Caco-2 (cell line): ENCODE measurements at regions of chr2 and their contacts with region 1.

Region 1: DNA sequence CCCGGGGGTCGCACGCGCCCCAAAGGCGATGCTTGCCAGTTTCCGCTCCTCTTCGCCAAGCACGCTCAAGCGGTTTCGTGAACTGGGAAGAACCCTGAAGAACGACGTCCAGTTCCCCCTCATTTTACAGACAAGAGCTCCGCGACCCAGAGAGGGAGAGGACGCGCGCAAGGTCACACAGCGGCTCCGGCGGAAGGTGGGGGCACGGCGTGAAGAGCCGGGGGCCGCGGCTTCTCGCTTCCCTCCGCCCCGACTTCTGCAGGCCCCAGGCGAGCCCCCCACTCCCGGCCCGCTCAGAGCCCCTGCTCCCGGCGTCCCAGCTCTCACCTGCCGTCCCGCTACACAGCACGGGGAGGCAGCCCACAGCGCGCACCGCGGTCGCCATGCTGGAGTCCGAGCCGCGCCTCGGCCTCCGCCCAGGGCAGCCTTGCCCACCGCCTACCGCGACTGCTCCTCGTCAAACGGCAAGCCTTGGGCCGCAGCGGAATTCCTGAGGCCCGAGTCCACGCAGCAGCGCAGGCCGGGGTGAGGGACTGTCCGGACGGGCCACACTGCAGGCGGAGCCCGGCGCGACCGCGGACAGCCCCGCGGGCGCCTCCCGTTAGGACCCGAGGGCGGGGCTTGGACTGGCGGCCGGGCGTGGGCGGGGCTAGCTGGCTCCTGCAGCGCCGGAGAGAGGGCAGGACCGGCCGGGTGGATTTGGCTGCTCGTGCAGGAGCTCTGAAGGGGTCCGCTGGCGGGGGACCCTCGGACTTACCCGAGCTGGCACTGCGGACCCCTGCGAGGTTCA is at the start of gene MRPS5:
- DNase-seq: peak; percentile 82 to 93
- H3K4me3 ChIP-seq: peak within 1 kb of the TSS; percentile 73
- H3K4me3 Mint-ChIP-seq: peak within 1 kb of the TSS; percentile 93
- H3K27ac Mint-ChIP-seq: peak within 1 kb of the TSS; percentile 95
- H3K4me1 ChIP-seq: peaks cover 6% of the 10 kb centered on the region; the same call in 1 of the 2 replicates
- H3K4me1 Mint-ChIP-seq: peaks cover 15% of the 10 kb centered on the region
- H3K27me3 ChIP-seq: no peaks in the 10 kb centered on the region
- H3K27me3 Mint-ChIP-seq: no peaks in the 10 kb centered on the region
- CTCF ChIP-seq: peak in 1 of 2 experiments; percentile 16
- total RNA-seq, gene MRPS5: 80.5 and 90.0 TPM in 2 replicates

Region 2: DNA sequence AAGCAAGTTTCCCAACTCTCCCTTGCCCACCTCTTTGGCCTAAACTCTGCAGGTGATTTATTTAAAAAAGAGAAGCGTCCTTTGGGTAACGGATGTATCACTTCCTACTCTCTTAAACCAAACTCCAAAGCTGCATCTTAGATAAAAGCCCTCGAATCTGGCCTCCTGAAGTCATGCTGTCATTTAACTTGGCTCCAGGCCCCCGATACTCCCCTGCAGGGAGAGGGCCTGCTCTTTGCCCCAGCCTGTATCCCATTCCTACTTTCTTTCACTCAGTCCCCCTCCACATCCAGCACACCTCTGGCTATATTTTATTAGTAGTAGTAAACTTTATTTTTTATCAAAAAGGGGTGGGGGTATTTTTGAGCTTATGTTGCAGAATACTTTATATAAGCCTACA is 231.4 kb before region 1 on chr2:
- CTCF ChIA-PET with region 1: no interaction called
- POLR2A ChIA-PET with region 1: no interaction called
- intact Hi-C with region 1: no loop called
- DNase-seq: no peak
- H3K4me3 ChIP-seq: no peak overlapping the region
- H3K4me3 Mint-ChIP-seq: no peak overlapping the region
- H3K27ac Mint-ChIP-seq: no peak overlapping the region
- H3K4me1 ChIP-seq: no peaks in the 10 kb centered on the region
- H3K4me1 Mint-ChIP-seq: no peaks in the 10 kb centered on the region
- H3K27me3 ChIP-seq: no peaks in the 10 kb centered on the region
- H3K27me3 Mint-ChIP-seq: peaks cover 11% of the 10 kb centered on the region
- CTCF ChIP-seq: no peak

Region 3: DNA sequence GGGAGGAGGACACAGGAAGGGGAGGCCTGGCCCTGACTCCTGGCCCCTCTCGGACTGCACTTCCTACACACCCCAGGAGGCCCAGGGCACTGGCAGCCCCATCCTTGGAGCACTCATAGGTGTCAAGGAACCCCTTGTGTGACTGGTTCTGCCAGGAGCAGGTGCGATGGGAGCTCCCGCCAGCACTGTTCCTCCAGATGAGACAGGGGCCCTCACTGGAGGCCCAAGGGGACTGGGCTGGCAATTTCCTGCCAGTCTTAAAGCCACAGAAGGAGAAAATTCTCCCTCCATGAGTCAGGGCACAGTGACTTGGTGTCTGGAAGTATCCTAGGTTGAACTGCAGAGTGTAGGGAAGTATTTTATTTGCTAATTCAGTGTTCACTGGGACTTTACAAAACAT is 138.9 kb before region 1 on chr2:
- CTCF ChIA-PET with region 1: no interaction called
- POLR2A ChIA-PET with region 1: no interaction called
- intact Hi-C with region 1: no loop called
- DNase-seq: no peak
- H3K4me3 ChIP-seq: no peak overlapping the region
- H3K4me3 Mint-ChIP-seq: no peak overlapping the region
- H3K27ac Mint-ChIP-seq: no peak overlapping the region
- H3K4me1 ChIP-seq: no peaks in the 10 kb centered on the region
- H3K4me1 Mint-ChIP-seq: no peaks in the 10 kb centered on the region
- H3K27me3 ChIP-seq: no peaks in the 10 kb centered on the region
- H3K27me3 Mint-ChIP-seq: peaks cover 18% of the 10 kb centered on the region
- CTCF ChIP-seq: no peak

Region 4: DNA sequence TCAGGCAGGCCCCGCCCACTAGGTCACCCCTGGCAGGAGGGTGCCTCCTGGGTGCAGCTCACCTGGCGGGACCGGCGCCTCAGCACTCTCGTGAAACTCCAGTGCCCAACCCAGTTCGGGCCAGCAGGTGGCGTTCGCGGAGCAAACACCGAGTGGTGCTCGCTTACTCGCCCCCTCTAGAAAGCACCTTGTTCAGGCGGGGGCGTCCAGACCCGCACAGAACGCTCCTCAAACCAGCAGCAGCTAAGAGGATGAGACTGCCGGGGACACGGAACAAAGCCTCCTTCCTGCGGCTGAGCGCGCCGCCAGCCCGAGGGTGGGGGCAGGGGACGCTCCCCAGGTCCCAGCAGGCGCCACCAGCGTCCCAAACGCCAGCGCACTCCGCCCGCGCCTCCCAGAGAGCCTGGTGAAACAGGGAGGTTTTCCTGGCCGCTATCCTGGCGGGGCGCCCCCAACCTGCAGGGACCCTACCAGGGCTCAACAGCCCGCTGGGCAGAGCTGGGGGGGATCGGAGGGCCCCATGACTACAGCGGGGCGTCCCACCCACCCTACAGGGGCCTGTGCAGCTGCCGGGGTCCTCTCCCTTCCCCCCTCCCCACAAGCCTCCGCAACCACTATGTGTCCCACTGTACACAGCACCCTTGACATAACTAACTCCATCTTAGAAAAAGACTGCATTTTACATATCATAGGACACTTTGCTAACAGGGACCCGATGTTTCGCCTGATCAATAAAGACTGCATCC is 44.6 kb before region 1 on chr2:
- CTCF ChIA-PET with region 1: interaction called, 12 read pairs
- POLR2A ChIA-PET with region 1: no interaction called
- intact Hi-C with region 1: no loop called
- DNase-seq: peak; percentile 92 to 93
- H3K4me3 ChIP-seq: peak overlapping the region; percentile 55
- H3K4me3 Mint-ChIP-seq: peak overlapping the region; percentile 71
- H3K27ac Mint-ChIP-seq: no peak overlapping the region
- H3K4me1 ChIP-seq: no peaks in the 10 kb centered on the region
- H3K4me1 Mint-ChIP-seq: no peaks in the 10 kb centered on the region
- H3K27me3 ChIP-seq: no peaks in the 10 kb centered on the region
- H3K27me3 Mint-ChIP-seq: no peaks in the 10 kb centered on the region
- CTCF ChIP-seq: peak; percentile 94

Region 5: GRCh38 chr2:95106081-95106480 is 15.5 kb before region 1 on chr2:
- CTCF ChIA-PET with region 1: no interaction called
- POLR2A ChIA-PET with region 1: interaction called, 10 read pairs
- intact Hi-C with region 1: no loop called
- DNase-seq: no peak
- H3K4me3 ChIP-seq: no peak overlapping the region
- H3K4me3 Mint-ChIP-seq: no peak overlapping the region
- H3K27ac Mint-ChIP-seq: no peak overlapping the region
- H3K4me1 ChIP-seq: no peaks in the 10 kb centered on the region
- H3K4me1 Mint-ChIP-seq: no peaks in the 10 kb centered on the region
- H3K27me3 ChIP-seq: no peaks in the 10 kb centered on the region
- H3K27me3 Mint-ChIP-seq: no peaks in the 10 kb centered on the region
- CTCF ChIP-seq: no peak

Region 6: DNA sequence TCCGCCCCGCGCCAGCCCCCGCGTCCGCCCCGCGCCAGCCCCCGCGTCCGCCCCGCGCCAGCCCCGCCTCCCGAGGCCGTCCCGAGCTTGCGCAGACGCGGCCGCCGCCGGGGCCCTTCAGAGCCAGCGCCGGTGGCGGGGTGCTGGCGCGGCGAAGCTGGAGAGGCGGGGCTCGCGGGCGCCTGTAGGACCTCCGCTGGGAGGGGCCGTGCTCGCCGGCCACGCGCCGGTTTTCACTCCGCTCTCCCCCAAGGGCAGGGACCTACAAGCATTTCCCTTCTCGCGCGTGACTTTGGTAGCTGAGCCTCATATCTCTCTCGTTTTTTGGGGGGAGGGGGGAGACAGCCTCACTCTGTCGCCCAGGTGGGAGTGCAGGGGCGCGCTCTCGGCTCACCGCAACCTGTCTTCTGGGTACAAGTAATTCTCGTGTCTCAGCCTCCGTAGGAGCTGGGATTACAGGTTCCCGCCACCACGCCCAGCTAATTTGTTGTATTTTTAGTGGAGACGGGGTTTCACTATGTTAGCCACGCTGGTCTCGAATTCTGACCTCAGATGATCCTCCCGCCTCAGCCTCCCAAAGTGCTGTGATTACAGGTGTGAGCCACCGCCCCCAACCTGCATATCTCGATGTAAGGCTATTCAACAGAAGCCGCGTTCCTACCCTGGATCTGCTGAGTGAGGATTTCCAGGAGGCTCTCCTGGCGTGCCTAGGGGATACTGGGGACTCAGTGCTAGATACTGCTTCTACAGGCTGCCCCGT is 38.3 kb after region 1 on chr2 and contains the start of gene ZNF514:
- CTCF ChIA-PET with region 1: interaction called, 3 read pairs
- POLR2A ChIA-PET with region 1: interaction called, 4 read pairs
- intact Hi-C with region 1: loop called (anchors 1 kb)
- DNase-seq: peak; percentile 72 to 85
- H3K4me3 ChIP-seq: peak within 1 kb of the TSS; percentile 76
- H3K4me3 Mint-ChIP-seq: peak within 1 kb of the TSS; percentile 85
- H3K27ac Mint-ChIP-seq: peak within 1 kb of the TSS; percentile 71
- H3K4me1 ChIP-seq: 0 out of 2 replicates have a peak, but pooled peaks cover 6% of the 10 kb centered on the region
- H3K4me1 Mint-ChIP-seq: peaks cover 8% of the 10 kb centered on the region
- H3K27me3 ChIP-seq: no peaks in the 10 kb centered on the region
- H3K27me3 Mint-ChIP-seq: no peaks in the 10 kb centered on the region
- CTCF ChIP-seq: no peak
- total RNA-seq, gene ZNF514: 20.0 and 21.9 TPM in 2 replicates

Region 7: GRCh38 chr2:95165129-95166064 is 43.8 kb after region 1 on chr2 and contains the start of gene ZNF2:
- CTCF ChIA-PET with region 1: interaction called, 3 read pairs
- POLR2A ChIA-PET with region 1: interaction called, 4 read pairs
- intact Hi-C with region 1: loop called (anchors 1 kb)
- DNase-seq: peak; percentile 97 to 98
- H3K4me3 ChIP-seq: peak within 1 kb of the TSS; percentile 89
- H3K4me3 Mint-ChIP-seq: peak within 1 kb of the TSS; percentile 95
- H3K27ac Mint-ChIP-seq: peak within 1 kb of the TSS; percentile 97
- H3K4me1 ChIP-seq: 0 out of 2 replicates have a peak, but pooled peaks cover 3% of the 10 kb centered on the region
- H3K4me1 Mint-ChIP-seq: peaks cover 7% of the 10 kb centered on the region
- H3K27me3 ChIP-seq: no peaks in the 10 kb centered on the region
- H3K27me3 Mint-ChIP-seq: no peaks in the 10 kb centered on the region
- CTCF ChIP-seq: no peak
- total RNA-seq, gene ZNF2: 3.8 and 4.2 TPM in 2 replicates

Region 8: GRCh38 chr2:95207111-95207961 is 85.7 kb after region 1 on chr2 and contains the start of gene ZNF892:
- CTCF ChIA-PET with region 1: no interaction called
- POLR2A ChIA-PET with region 1: no interaction called
- intact Hi-C with region 1: loop called (anchors 1 kb)
- DNase-seq: peak; percentile 95 to 96
- H3K4me3 ChIP-seq: peak within 1 kb of the TSS; percentile 61
- H3K4me3 Mint-ChIP-seq: peak within 1 kb of the TSS; percentile 75
- H3K27ac Mint-ChIP-seq: peak within 1 kb of the TSS; percentile 15
- H3K4me1 ChIP-seq: no peaks in the 10 kb centered on the region
- H3K4me1 Mint-ChIP-seq: peaks cover 7% of the 10 kb centered on the region
- H3K27me3 ChIP-seq: no peaks in the 10 kb centered on the region
- H3K27me3 Mint-ChIP-seq: no peaks in the 10 kb centered on the region
- CTCF ChIP-seq: peak; percentile 34 to 62
- total RNA-seq, gene ZNF892: 3.4 and 3.5 TPM in 2 replicates